ENCODE measurements at regions of chr2 and their contacts with region 1.

Region 1: GRCh38 chr2:197514754-197515153 is 1.1 kb upstream of the MOB4 start:
- DNase-seq: no peak
- H3K4me3 ChIP-seq: peak overlapping the region in 2 of 3 donors; percentile 93 to 94
- H3K27ac ChIP-seq: peak overlapping the region; percentile 96 to 97
- H3K4me1 ChIP-seq: peaks cover 0 to 8% of the 10 kb centered on the region in 2 donors
- H3K27me3 ChIP-seq: no peaks in the 10 kb centered on the region
- CTCF ChIP-seq: no peak
- POLR2A ChIP-seq: no peak

Region 2: GRCh38 chr2:196249860-196250259 is 1264.9 kb before region 1 on chr2:
- intact Hi-C with region 1: loop called (anchors 5 kb)
- DNase-seq: no peak
- H3K4me3 ChIP-seq: no peak overlapping the region
- H3K27ac ChIP-seq: peak overlapping the region in 1 of 2 donors; percentile 29
- H3K4me1 ChIP-seq: no peaks in the 10 kb centered on the region
- H3K27me3 ChIP-seq: no peaks in the 10 kb centered on the region
- CTCF ChIP-seq: no peak
- POLR2A ChIP-seq: no peak

Region 3: DNA sequence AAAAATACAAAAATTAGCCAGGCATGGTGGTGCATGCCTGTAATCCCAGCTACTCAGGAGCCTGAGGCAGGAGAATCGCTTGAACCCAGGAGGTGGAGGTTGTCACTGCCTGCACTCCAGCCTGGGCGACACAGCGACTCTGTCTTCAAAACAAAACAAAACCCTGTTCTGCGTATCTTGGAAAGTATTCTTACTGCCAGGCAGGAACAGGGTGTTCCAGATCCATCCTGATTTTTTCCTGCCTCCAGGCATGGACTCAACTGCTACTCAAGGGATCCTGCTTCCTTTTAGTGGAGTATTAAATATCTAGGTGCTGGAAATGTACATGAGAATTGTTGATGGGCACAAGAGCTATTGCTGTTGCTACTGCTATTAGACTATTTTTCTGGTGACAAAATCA is 27.4 kb before region 1 on chr2:
- intact Hi-C with region 1: no loop called
- DNase-seq: peak; percentile 29 to 56
- H3K4me3 ChIP-seq: no peak overlapping the region
- H3K27ac ChIP-seq: peak overlapping the region; percentile 54 to 77
- H3K4me1 ChIP-seq: no peaks in the 10 kb centered on the region
- H3K27me3 ChIP-seq: no peaks in the 10 kb centered on the region
- CTCF ChIP-seq: no peak
- POLR2A ChIP-seq: no peak